A549 (cell line): ENCODE measurements at regions of chr14 and their contacts with region 1.

Region 1: DNA sequence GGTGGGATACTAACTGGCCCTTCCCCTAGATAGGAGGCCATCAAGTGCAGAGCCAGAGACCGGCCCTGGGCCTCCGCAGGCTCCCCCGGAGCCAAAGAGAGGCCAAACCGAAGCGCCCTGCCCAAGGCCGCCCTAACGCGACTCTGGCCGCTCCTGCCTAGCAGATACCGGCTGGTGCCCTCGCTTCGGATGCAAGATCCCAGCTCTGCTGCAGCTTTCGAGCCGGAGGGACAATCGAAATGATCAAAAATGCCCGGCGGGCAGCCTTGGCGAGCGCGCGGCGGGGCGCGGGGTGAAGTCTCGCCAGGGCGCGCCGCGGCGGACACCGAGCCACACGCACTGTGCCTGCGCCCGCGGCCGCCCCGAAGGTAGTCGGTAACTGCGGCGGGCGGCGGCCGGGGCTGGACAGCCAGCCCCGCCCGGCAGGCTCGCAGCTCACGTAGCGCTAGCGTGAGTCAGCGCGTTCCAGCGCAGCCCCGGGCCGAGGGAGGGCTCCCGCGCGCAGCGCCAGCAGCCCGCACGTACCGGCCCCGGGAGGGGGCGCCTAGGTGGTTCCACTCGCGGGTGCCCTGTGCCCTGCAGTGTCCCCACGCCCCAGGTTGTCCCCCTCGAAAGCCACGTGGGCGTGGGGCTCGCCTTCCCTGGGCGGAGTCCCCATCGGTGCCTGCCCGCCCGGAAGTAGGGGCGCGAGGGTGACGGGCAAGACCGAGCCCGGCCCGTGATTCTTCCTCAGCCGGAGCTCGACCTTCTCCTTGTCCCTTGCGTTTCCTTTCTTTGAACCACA is 109.2 kb upstream of the EGLN3 start:
- DNase-seq: peak; percentile 73 to 82
- ATAC-seq: peak; percentile 90 to 96
- H3K4me3 ChIP-seq: peak overlapping the region; percentile 52
- H3K27ac ChIP-seq: peak overlapping the region; percentile 90 to 95
- H3K4me1 ChIP-seq: peaks cover 41% of the 10 kb centered on the region
- CTCF ChIP-seq: peak; percentile 41
- EP300 ChIP-seq: no peak
- POLR2A ChIP-seq: peak; percentile 60
- RAD21 ChIP-seq: peak in 1 of 2 experiments; percentile 56; a peak in 3 of 5 replicates

Region 2: DNA sequence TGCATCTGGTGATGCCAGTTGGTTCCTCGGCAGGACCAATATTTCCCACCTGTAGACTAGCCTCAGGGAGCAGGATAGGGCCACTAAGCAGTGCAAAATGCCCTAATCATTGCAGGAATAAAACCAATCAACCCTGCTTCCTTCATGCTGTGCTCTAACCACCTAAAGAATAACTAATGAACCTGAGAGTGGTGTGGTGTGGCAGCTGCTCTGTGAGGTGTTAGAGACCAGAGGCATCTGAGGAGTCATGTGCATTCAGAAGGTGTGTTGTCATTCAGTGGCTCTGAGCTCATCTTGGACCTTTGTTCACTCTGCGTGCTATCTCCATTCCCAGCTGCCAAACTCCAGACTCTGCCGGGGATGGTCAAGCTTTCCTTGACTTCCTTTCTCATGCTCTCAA is 27.5 kb after region 1 on chr14:
- CTCF ChIA-PET with region 1: interaction called, 11 read pairs
- POLR2A ChIA-PET with region 1: no interaction called
- DNase-seq: no peak
- ATAC-seq: no peak
- H3K4me3 ChIP-seq: no peak overlapping the region
- H3K27ac ChIP-seq: no peak overlapping the region
- H3K4me1 ChIP-seq: peaks cover 7% of the 10 kb centered on the region; the same call in 2 of the 3 replicates
- CTCF ChIP-seq: no peak
- EP300 ChIP-seq: no peak
- POLR2A ChIP-seq: no peak
- RAD21 ChIP-seq: no peak

Region 3: DNA sequence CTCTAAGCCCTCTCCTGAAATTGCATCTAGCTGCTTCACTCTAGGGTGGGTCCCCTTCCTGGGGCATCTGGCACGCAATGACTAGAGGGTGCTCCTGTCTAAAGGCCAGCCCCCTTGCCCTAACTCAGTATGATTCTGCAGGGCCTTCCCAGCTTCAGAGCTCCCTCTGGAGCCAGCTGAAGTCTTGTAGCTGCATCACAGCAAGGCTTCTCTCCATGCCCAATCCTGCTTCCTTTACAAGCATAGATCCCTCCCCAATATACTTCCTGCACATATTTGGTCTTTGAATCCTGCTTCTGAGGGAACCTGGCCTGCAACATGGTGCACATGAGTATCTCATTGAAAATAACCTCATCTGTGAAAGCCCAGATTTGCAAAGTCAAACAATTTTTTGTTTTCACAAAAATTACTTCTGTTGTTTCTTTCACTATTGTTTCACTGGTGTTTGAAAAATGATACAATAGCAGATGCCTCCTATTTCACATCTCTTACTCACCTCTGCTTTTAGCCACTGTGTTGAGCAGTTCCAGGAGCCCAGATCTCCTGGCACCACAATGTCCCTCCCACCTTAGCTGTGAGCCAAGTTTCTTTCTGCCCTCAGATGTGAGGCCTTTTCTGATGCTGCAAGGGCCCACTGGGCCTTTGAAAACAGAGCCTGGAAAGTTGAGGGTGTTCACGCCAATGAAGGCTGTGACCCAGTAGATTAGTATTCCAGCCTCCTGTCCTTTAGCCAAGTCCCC is 60.4 kb after region 1 on chr14:
- CTCF ChIA-PET with region 1: no interaction called
- POLR2A ChIA-PET with region 1: no interaction called
- DNase-seq: no peak
- ATAC-seq: peak in 1 of 2 experiments; percentile 59; a peak in 2 of 6 replicates
- H3K4me3 ChIP-seq: no peak overlapping the region
- H3K27ac ChIP-seq: no peak overlapping the region
- H3K4me1 ChIP-seq: peaks cover 10% of the 10 kb centered on the region; the same call in 1 of the 3 replicates
- CTCF ChIP-seq: no peak
- EP300 ChIP-seq: no peak
- POLR2A ChIP-seq: no peak
- RAD21 ChIP-seq: no peak